ENCODE measurements at regions of chr16 and their contacts with region 1.

Region 1: GRCh38 chr16:66899945-66900710 is 18.6 kb downstream of the CDH16 start:
- DNase-seq: peak; percentile 72
- ATAC-seq: peak; percentile 3; the same call in 2 of the 3 replicates
- H3K4me3 ChIP-seq: peak overlapping the region; percentile 20 to 58 (median 24); a peak in 5 of 6 replicates
- H3K27ac ChIP-seq: no peak overlapping the region
- H3K4me1 ChIP-seq: peaks cover 90% of the 10 kb centered on the region
- H3K27me3 ChIP-seq: peaks cover 0 to 2% of the 10 kb centered on the region in 2 experiments; a peak in 1 of 5 replicates
- CTCF ChIP-seq: no peak
- EP300 ChIP-seq: peak in 1 of 2 experiments; percentile 32; a peak in 1 of 4 replicates
- POLR2A ChIP-seq: no peak
- RAD21 ChIP-seq: no peak

Region 2: DNA sequence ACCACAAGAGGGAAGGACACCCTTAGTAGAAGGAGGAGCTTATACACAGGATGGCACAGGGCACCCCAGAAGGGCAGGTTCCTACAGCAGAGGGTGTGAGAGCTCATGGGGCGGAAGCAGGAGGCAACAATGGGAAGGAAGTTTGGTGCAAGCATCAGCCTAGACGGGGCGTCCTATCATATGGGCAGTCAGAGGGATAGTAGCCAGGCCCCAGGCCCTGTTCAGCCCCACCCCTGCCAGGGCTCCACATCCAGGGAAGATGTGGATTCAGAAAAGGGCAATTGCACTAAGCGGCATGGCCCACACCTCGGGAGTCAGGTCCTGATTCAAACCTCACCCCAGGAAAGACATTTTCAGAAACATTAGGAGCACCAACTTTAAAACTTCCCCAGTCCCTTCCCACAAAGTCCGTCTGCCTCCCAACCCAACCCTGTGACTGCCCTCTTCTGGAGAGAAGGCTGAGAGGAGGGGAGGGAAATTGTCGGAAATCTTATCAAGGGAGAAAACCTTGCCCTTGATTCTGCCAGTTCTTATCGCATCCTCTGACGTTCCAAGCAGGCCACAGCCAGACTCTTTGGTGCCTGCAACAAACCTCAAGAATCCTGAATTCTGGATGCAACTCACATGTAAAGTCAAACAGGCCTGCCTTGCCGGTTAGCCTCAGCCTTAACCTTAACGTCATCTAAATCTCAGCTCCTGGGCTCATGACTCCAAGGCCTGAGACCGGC is 732.4 kb before region 1 on chr16:
- CTCF ChIA-PET with region 1: no interaction called
- POLR2A ChIA-PET with region 1: no interaction called
- in situ Hi-C with region 1: no loop called
- intact Hi-C with region 1: no loop called
- DNase-seq: no peak
- ATAC-seq: no peak; the same call in 2 of the 3 replicates
- H3K4me3 ChIP-seq: no peak overlapping the region
- H3K27ac ChIP-seq: no peak overlapping the region
- H3K4me1 ChIP-seq: no peaks in the 10 kb centered on the region
- H3K27me3 ChIP-seq: peaks cover 3 to 28% of the 10 kb centered on the region in 2 experiments; a peak in 4 of 5 replicates
- CTCF ChIP-seq: peak; percentile 29
- EP300 ChIP-seq: no peak
- POLR2A ChIP-seq: no peak
- RAD21 ChIP-seq: no peak

Region 3: GRCh38 chr16:66824006-66824405 is 76.1 kb before region 1 on chr16:
- CTCF ChIA-PET with region 1: no interaction called
- POLR2A ChIA-PET with region 1: no interaction called
- in situ Hi-C with region 1: no loop called
- intact Hi-C with region 1: no loop called
- DNase-seq: no peak
- ATAC-seq: no peak; the same call in 2 of the 3 replicates
- H3K4me3 ChIP-seq: no peak overlapping the region
- H3K27ac ChIP-seq: peak overlapping the region; percentile 1
- H3K4me1 ChIP-seq: peaks cover 20% of the 10 kb centered on the region
- H3K27me3 ChIP-seq: no peaks in the 10 kb centered on the region
- CTCF ChIP-seq: no peak
- EP300 ChIP-seq: no peak
- POLR2A ChIP-seq: no peak
- RAD21 ChIP-seq: no peak

Region 4: GRCh38 chr16:66858740-66859396 is 41.3 kb before region 1 on chr16:
- CTCF ChIA-PET with region 1: no interaction called
- POLR2A ChIA-PET with region 1: no interaction called
- in situ Hi-C with region 1: no loop called
- intact Hi-C with region 1: no loop called
- DNase-seq: no peak
- ATAC-seq: peak; percentile 21; the same call in 2 of the 3 replicates
- H3K4me3 ChIP-seq: no peak overlapping the region
- H3K27ac ChIP-seq: no peak overlapping the region
- H3K4me1 ChIP-seq: no peaks in the 10 kb centered on the region
- H3K27me3 ChIP-seq: peaks cover 0 to 3% of the 10 kb centered on the region in 2 experiments; a peak in 2 of 5 replicates
- CTCF ChIP-seq: no peak
- EP300 ChIP-seq: no peak
- POLR2A ChIP-seq: no peak
- RAD21 ChIP-seq: no peak

Region 5: DNA sequence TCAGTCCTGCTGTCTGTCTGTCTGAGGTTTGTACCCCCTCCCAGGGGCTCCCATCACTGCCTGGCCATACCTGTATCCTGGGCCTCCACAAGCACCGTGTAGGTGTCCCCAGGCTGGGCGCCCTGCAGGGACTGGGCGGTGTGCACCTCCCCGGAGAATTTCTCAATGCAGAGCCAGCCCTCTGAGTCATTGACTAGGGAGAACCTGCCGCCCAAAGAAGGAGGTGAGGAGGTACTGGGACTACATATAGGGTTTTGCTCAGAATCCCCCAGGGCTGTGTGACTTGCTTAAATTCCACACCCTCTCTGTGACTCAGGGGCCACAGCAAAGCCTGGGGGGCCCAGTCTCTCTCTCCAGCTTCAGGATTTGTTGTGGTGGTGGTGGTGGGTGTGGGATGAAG is 11.0 kb after region 1 on chr16:
- CTCF ChIA-PET with region 1: interaction called, 10 read pairs
- POLR2A ChIA-PET with region 1: interaction called, 86 read pairs
- in situ Hi-C with region 1: no loop called
- intact Hi-C with region 1: no loop called
- DNase-seq: no peak
- ATAC-seq: no peak
- H3K4me3 ChIP-seq: no peak overlapping the region
- H3K27ac ChIP-seq: no peak overlapping the region
- H3K4me1 ChIP-seq: peaks cover 34% of the 10 kb centered on the region
- H3K27me3 ChIP-seq: no peaks in the 10 kb centered on the region; a peak in 1 of 5 replicates
- CTCF ChIP-seq: no peak
- EP300 ChIP-seq: no peak
- POLR2A ChIP-seq: no peak
- RAD21 ChIP-seq: no peak

Region 6: DNA sequence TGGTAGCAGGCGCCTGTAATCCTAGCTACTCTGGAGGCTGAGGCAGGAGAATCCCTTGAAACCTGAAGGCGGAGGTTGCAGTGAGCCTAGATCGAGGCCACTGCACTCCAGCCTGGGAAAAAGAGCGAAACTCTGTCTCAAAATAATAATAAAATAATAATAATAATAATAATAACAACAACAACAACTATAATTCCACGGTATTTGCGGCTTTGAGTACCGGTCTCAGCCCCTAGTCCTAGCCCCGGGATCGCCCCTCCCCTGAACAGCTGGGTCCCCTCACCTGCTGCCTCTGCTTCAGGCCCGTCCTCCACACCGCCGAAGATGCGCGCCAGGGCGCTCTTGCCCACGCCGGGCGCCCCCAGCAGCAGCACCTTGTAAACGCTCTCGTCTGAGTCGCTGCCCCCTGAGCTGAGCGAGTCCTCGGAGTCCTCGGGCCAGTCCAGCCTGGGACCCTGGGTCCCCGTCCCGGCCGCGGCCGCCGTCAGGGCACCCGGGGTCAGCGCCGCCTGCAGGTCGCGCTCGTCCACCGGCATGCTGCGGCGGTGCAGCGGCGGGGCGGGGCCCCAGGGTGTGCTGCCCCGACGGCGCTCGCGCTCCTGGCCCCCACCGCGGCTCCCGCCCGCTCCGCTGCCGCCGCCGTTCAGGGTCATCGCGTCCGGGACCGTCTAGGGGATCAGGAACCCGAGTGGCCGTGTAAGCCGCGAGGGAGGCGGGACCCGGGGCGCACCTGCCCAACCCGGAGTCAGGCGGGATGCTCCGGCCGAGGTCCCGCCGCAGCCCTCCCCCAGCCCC is 24.6 kb after region 1 on chr16:
- CTCF ChIA-PET with region 1: interaction called, 37 read pairs
- POLR2A ChIA-PET with region 1: interaction called, 86 read pairs
- in situ Hi-C with region 1: no loop called
- intact Hi-C with region 1: loop called (anchors 1 kb)
- DNase-seq: no peak
- ATAC-seq: peak; percentile 79
- H3K4me3 ChIP-seq: peak overlapping the region; percentile 40 to 73 (median 56); a peak in 4 of 6 replicates
- H3K27ac ChIP-seq: no peak overlapping the region
- H3K4me1 ChIP-seq: peaks cover 44% of the 10 kb centered on the region
- H3K27me3 ChIP-seq: peaks cover 5 to 22% of the 10 kb centered on the region in 2 experiments; a peak in 4 of 5 replicates
- CTCF ChIP-seq: peak; percentile 77
- EP300 ChIP-seq: no peak
- POLR2A ChIP-seq: no peak
- RAD21 ChIP-seq: peak; percentile 95